ENCODE measurements at regions of chr1 and their contacts with region 1.

Region 1: GRCh38 chr1:215526553-215527151 is 40.5 kb upstream of the KCTD3 start:
- DNase-seq: peak in 4 of 5 donors; percentile 23 to 33 (median 32)
- H3K4me3 ChIP-seq: no peak overlapping the region
- H3K4me3 Mint-ChIP-seq: no peak overlapping the region
- H3K27ac ChIP-seq: no peak overlapping the region
- H3K27ac Mint-ChIP-seq: no peak overlapping the region
- H3K4me1 ChIP-seq: no peaks in the 10 kb centered on the region
- H3K4me1 Mint-ChIP-seq: peaks cover 0 to 1% (median 0%) of the 10 kb centered on the region in 4 donors
- H3K27me3 ChIP-seq: no peaks in the 10 kb centered on the region
- H3K27me3 Mint-ChIP-seq: peaks cover 0 to 1% of the 10 kb centered on the region in 2 donors

Region 2: DNA sequence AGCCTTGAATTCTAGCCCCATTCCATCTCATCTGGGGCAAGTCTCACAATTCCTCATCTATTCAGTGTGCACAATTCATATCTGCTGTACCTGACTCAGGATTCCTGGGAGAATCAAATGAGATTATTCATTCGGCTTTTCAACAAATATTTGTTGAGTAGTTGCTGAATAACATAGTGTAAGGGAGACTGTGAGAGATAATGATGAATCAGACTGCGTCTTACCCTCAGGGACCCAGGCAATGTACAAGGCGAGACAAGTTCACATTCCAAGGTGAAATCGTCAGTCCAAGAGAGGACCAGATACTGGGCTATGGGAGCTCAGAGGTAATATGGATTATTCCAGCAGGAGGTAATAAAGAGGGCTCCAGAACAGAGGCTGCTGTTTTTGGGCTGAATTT is 1313.5 kb before region 1 on chr1:
- CTCF ChIA-PET with region 1: interaction called, 3 read pairs
- POLR2A ChIA-PET with region 1: no interaction called
- intact Hi-C with region 1: loop called (anchors 2 kb)
- DNase-seq: no peak
- H3K4me3 ChIP-seq: no peak overlapping the region
- H3K4me3 Mint-ChIP-seq: no peak overlapping the region
- H3K27ac ChIP-seq: no peak overlapping the region
- H3K27ac Mint-ChIP-seq: no peak overlapping the region
- H3K4me1 ChIP-seq: no peaks in the 10 kb centered on the region
- H3K4me1 Mint-ChIP-seq: peaks cover 0 to 5% (median 3%) of the 10 kb centered on the region in 4 donors
- H3K27me3 ChIP-seq: no peaks in the 10 kb centered on the region
- H3K27me3 Mint-ChIP-seq: peaks cover 13 to 16% of the 10 kb centered on the region in 2 donors

Region 3: GRCh38 chr1:215923128-215923824 is 396.6 kb after region 1 on chr1:
- CTCF ChIA-PET with region 1: no interaction called
- POLR2A ChIA-PET with region 1: no interaction called
- intact Hi-C with region 1: no loop called
- DNase-seq: no peak
- H3K4me3 ChIP-seq: no peak overlapping the region
- H3K4me3 Mint-ChIP-seq: no peak overlapping the region
- H3K27ac ChIP-seq: no peak overlapping the region
- H3K27ac Mint-ChIP-seq: no peak overlapping the region
- H3K4me1 ChIP-seq: no peaks in the 10 kb centered on the region
- H3K4me1 Mint-ChIP-seq: no peaks in the 10 kb centered on the region
- H3K27me3 ChIP-seq: no peaks in the 10 kb centered on the region
- H3K27me3 Mint-ChIP-seq: no peaks in the 10 kb centered on the region

Measured in CD4-positive, alpha-beta memory T cell (primary cell).